Vagina (tissue), 2 donors: ENCODE measurements at regions of chr16 and their contacts with region 1.

Region 1: DNA sequence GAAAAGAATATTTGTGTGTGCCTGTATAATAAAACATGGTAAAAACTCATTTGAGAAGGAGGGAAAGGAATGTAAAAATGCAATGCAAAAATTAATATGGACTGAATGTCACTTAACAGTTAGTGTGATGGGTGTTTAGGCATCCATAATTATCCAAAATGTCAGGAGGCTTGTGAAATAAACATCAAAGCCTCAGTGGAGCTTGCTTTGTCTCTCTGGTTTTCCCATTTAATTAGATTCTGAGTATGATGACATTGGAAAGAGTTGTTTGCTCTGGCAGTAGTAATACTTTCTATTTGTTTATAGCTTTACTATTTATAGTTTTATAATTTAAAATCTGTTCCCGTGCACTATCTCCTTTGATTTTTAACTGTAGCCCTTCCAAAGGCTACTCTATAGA is 51.9 kb downstream of the CNTNAP4 start:
- DNase-seq: no peak
- H3K4me3 ChIP-seq: no peak overlapping the region
- H3K27ac ChIP-seq: no peak overlapping the region
- H3K4me1 ChIP-seq: no peaks in the 10 kb centered on the region
- H3K27me3 ChIP-seq: no peaks in the 10 kb centered on the region
- CTCF ChIP-seq: no peak
- POLR2A ChIP-seq: no peak

Region 2: DNA sequence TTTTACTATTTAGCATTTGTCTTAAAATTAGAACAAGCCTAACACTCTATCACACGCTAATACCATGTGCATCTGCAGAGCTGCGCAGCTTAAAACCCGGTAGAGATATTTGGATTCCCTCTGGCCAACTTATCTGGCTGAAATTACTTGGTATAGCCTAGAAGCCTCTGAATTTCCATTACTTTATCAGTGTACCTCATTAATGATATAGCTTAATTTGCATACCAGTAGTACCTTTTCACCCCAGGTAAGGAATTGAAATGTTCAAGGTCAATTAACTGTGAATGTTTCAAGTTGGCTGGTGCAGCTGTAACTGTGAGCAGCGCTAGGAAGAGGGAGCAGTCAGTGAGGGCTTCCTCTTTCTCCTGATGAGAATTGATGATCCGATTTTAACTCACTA is 22.3 kb after region 1 on chr16:
- intact Hi-C with region 1: loop called (anchors 1 kb)
- DNase-seq: no peak
- H3K4me3 ChIP-seq: no peak overlapping the region
- H3K27ac ChIP-seq: no peak overlapping the region
- H3K4me1 ChIP-seq: no peaks in the 10 kb centered on the region
- H3K27me3 ChIP-seq: no peaks in the 10 kb centered on the region
- CTCF ChIP-seq: no peak
- POLR2A ChIP-seq: no peak